HCT116 (cell line): ENCODE measurements at regions of chr12 and their contacts with region 1.

Region 1: DNA sequence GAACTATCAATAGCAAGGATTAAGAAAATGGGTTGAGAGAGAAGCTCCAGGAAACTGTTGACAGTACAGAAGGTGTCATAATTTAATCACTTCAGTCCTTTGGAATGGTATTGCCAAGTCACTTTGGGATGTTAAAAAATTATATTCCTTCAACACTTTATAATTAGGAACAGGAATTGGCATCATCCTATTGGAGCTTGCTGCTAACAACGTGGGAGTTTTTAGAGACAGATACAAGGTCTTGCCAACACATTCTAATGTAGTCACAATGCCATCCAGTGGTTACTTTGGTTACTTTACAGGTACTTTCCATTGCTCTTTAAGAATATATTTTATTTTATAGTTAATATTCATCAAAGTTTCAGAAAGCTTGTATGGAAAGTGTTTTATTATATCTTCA is 310.1 kb downstream of the SYT1 start:
- DNase-seq: peak; percentile 42
- ATAC-seq: peak; percentile 53; the same call in 1 of the 2 replicates
- H3K4me3 ChIP-seq: no peak overlapping the region
- H3K27ac ChIP-seq: no peak overlapping the region
- H3K4me1 ChIP-seq: no peaks in the 10 kb centered on the region
- H3K27me3 ChIP-seq: no peaks in the 10 kb centered on the region
- CTCF ChIP-seq: peak in 1 of 3 experiments; percentile 29; a peak in 2 of 6 replicates
- POLR2A ChIP-seq: no peak
- RAD21 ChIP-seq: peak; percentile 69

Region 2: GRCh38 chr12:78002878-78003277 is 1171.7 kb before region 1 on chr12:
- CTCF ChIA-PET with region 1: no interaction called
- POLR2A ChIA-PET with region 1: no interaction called
- RAD21 ChIA-PET with region 1: no interaction called
- intact Hi-C with region 1: loop called (anchors 5 kb)
- DNase-seq: no peak
- ATAC-seq: no peak
- H3K4me3 ChIP-seq: no peak overlapping the region
- H3K27ac ChIP-seq: no peak overlapping the region
- H3K4me1 ChIP-seq: no peaks in the 10 kb centered on the region
- H3K27me3 ChIP-seq: no peaks in the 10 kb centered on the region
- CTCF ChIP-seq: no peak
- POLR2A ChIP-seq: no peak
- RAD21 ChIP-seq: peak; percentile 42

Region 3: DNA sequence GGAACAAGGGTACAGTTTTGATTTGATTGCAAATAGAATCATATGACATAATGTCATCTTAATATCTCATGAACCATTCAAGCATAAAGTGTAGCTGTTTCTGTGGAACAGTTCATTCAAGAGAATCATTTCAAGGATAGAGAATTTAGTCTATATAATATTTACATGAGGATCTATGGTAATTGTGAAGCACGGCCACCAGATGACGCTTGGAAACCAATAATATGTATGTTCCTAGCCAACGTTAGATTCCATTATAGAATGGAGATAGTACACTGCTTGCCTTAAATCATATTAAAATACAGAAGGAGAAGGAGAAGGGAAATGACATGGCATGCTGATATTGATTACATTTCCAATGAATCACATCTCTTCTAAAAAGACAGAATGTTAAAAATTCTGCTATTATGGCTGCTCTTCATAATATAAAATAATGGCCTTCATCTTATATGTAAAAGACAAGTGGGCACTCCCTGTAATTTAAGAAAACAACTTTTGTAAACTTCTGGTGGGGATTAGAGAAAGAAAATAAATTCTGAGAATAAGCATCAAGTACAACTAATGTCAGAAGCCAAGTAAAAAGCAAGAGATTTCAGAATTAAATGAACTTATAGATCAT is 993.0 kb before region 1 on chr12:
- CTCF ChIA-PET with region 1: no interaction called
- POLR2A ChIA-PET with region 1: no interaction called
- RAD21 ChIA-PET with region 1: no interaction called
- intact Hi-C with region 1: loop called (anchors 5 kb)
- DNase-seq: no peak
- ATAC-seq: no peak
- H3K4me3 ChIP-seq: no peak overlapping the region
- H3K27ac ChIP-seq: no peak overlapping the region
- H3K4me1 ChIP-seq: no peaks in the 10 kb centered on the region
- H3K27me3 ChIP-seq: no peaks in the 10 kb centered on the region
- CTCF ChIP-seq: peak; percentile 13 to 53 (median 19); a peak in 4 of 6 replicates
- POLR2A ChIP-seq: no peak
- RAD21 ChIP-seq: peak; percentile 67

Region 4: GRCh38 chr12:78470354-78471195 is 704.1 kb before region 1 on chr12:
- CTCF ChIA-PET with region 1: interaction called, 16 read pairs
- POLR2A ChIA-PET with region 1: interaction called, 6 read pairs
- RAD21 ChIA-PET with region 1: no interaction called
- intact Hi-C with region 1: loop called (anchors 10 kb)
- DNase-seq: peak; percentile 37
- ATAC-seq: peak; percentile 83
- H3K4me3 ChIP-seq: no peak overlapping the region
- H3K27ac ChIP-seq: no peak overlapping the region
- H3K4me1 ChIP-seq: no peaks in the 10 kb centered on the region
- H3K27me3 ChIP-seq: no peaks in the 10 kb centered on the region
- CTCF ChIP-seq: peak; percentile 55 to 75 (median 68); a peak in 5 of 6 replicates
- POLR2A ChIP-seq: no peak
- RAD21 ChIP-seq: peak; percentile 70

Region 5: GRCh38 chr12:79300166-79300501 is 125.5 kb after region 1 on chr12:
- CTCF ChIA-PET with region 1: no interaction called
- POLR2A ChIA-PET with region 1: no interaction called
- RAD21 ChIA-PET with region 1: no interaction called
- intact Hi-C with region 1: no loop called
- DNase-seq: no peak
- ATAC-seq: no peak
- H3K4me3 ChIP-seq: no peak overlapping the region
- H3K27ac ChIP-seq: no peak overlapping the region
- H3K4me1 ChIP-seq: no peaks in the 10 kb centered on the region
- H3K27me3 ChIP-seq: no peaks in the 10 kb centered on the region
- CTCF ChIP-seq: no peak
- POLR2A ChIP-seq: no peak
- RAD21 ChIP-seq: no peak